ENCODE measurements at regions of chr13 and their contacts with region 1.

Region 1: GRCh38 chr13:37510441-37510840 is 88.1 kb downstream of the POSTN start:
- DNase-seq: no peak
- H3K4me3 ChIP-seq: no peak overlapping the region
- H3K27ac ChIP-seq: no peak overlapping the region
- H3K4me1 ChIP-seq: no peaks in the 10 kb centered on the region
- H3K27me3 ChIP-seq: no peaks in the 10 kb centered on the region
- CTCF ChIP-seq: no peak
- POLR2A ChIP-seq: no peak

Region 2: GRCh38 chr13:37163641-37164265 is 346.7 kb before region 1 on chr13:
- intact Hi-C with region 1: loop called (anchors 5 kb)
- DNase-seq: no peak
- H3K4me3 ChIP-seq: no peak overlapping the region
- H3K27ac ChIP-seq: no peak overlapping the region
- H3K4me1 ChIP-seq: no peaks in the 10 kb centered on the region
- H3K27me3 ChIP-seq: no peaks in the 10 kb centered on the region
- CTCF ChIP-seq: no peak
- POLR2A ChIP-seq: no peak

Measured in breast epithelium (tissue), 4 donors.